IMR-90 (cell line): ENCODE measurements at regions of chr5 and their contacts with region 1.

Region 1: DNA sequence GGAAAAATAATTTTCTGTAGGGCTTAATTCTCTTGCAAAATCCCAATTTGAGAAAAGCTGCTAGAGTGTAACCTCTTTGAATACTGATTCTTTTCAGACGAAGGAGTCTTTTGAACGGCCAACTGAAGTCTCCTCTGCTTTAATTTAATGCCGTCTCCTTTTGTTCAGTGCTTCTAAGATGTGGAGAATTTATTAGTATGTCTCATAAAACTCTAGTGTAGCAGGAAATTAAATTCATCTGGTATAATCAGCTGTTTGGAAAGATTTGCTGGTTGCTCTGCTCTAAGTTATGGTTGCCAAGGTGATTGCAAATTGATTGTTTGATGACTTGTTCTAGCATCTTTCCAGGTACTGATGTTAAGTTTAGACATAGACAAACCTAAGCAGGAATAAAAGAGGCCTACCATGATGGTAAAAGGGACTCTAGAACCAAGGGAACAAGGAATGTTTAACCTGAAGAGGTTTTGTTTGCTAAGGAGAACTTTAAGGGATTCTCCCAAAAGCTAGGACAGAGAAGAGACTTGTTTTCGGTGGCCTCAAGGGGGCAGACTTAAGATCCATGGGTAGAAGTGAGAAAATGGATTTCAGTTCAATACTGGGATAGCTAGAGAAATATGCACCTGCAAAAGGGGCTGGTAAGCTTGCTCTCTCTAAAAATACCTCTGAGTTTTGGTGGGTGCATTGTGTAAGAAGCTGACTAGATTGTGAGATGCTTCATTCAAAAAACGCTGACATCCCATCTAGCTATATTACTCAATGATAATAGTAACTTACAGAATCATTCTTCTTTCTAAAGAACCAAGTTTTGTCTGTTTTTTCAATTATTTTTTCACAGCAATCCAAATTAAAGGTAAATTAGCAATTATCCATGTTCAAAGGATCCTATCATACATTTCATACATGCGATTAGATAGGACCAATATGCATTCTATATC is 5.7 kb upstream of the ADRB2 start:
- DNase-seq: peak; percentile 50
- ATAC-seq: peak; percentile 77
- H3K4me3 ChIP-seq: no peak overlapping the region
- H3K27ac ChIP-seq: no peak overlapping the region
- H3K4me1 ChIP-seq: 0 out of 2 replicates have a peak, but pooled peaks cover 2% of the 10 kb centered on the region
- H3K27me3 ChIP-seq: no peaks in the 10 kb centered on the region; the same call in 1 of the 2 replicates
- CTCF ChIP-seq: peak; percentile 59
- POLR2A ChIP-seq: no peak
- RAD21 ChIP-seq: peak; percentile 57

Region 2: GRCh38 chr5:148559461-148559860 is 261.3 kb before region 1 on chr5:
- CTCF ChIA-PET with region 1: no interaction called
- POLR2A ChIA-PET with region 1: no interaction called
- dilution Hi-C with region 1: no loop called
- in situ Hi-C with region 1: no loop called
- intact Hi-C with region 1: no loop called
- DNase-seq: no peak
- ATAC-seq: no peak
- H3K4me3 ChIP-seq: no peak overlapping the region
- H3K27ac ChIP-seq: no peak overlapping the region
- H3K4me1 ChIP-seq: no peaks in the 10 kb centered on the region
- H3K27me3 ChIP-seq: 0 out of 2 replicates have a peak, but pooled peaks cover 1% of the 10 kb centered on the region
- CTCF ChIP-seq: no peak
- POLR2A ChIP-seq: no peak
- RAD21 ChIP-seq: no peak

Region 3: GRCh38 chr5:148794729-148795561 is 25.8 kb before region 1 on chr5:
- CTCF ChIA-PET with region 1: no interaction called
- POLR2A ChIA-PET with region 1: no interaction called
- dilution Hi-C with region 1: no loop called
- in situ Hi-C with region 1: no loop called
- intact Hi-C with region 1: no loop called
- DNase-seq: peak; percentile 96
- ATAC-seq: no peak; the same call in 1 of the 2 replicates
- H3K4me3 ChIP-seq: no peak overlapping the region
- H3K27ac ChIP-seq: peak overlapping the region; percentile 36; the same call in 1 of the 2 replicates
- H3K4me1 ChIP-seq: peaks cover 10% of the 10 kb centered on the region
- H3K27me3 ChIP-seq: no peaks in the 10 kb centered on the region
- CTCF ChIP-seq: no peak
- POLR2A ChIP-seq: no peak
- RAD21 ChIP-seq: no peak

Region 4: DNA sequence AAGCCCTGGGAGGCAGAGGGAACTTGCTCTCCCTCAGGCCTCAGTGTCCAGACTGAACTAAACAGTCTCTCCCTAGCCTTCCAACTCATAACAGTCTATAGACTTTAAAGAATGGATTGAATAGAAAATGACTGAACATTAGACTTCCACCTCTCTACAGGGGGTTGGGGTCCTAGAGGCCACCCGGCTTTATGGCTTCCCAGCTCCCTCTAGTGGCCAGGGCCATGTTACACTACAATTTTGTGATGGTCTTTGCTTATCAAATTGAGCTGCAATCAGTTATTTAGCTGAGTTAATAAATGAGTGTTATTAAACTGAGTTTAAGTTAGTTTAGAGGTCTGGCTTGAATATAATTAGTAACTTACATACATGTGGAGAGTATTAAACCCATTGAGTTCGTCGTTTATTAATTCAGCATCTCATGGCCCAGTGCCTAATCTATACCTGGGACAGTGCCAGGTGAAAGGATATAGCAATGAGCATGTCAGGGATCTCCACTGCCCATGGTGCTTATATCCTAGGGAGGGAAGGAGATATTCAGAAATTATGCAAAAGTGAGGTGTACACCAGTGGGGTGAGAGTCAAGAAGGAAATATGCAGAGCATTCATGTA is 137.0 kb after region 1 on chr5:
- CTCF ChIA-PET with region 1: interaction called, 14 read pairs
- POLR2A ChIA-PET with region 1: no interaction called
- dilution Hi-C with region 1: no loop called
- in situ Hi-C with region 1: no loop called
- intact Hi-C with region 1: loop called (anchors 1 kb)
- DNase-seq: peak; percentile 43
- ATAC-seq: peak; percentile 73
- H3K4me3 ChIP-seq: no peak overlapping the region
- H3K27ac ChIP-seq: no peak overlapping the region
- H3K4me1 ChIP-seq: no peaks in the 10 kb centered on the region
- H3K27me3 ChIP-seq: no peaks in the 10 kb centered on the region
- CTCF ChIP-seq: peak; percentile 83
- POLR2A ChIP-seq: no peak
- RAD21 ChIP-seq: peak; percentile 86